Lower lobe of right lung (tissue), 2 donors: ENCODE measurements at regions of chr2 and their contacts with region 1.

Region 1: GRCh38 chr2:112941753-112942658 is 31.0 kb downstream of the IL37 start:
- DNase-seq: peak; percentile 83
- ATAC-seq: peak; percentile 88 to 94
- H3K4me3 ChIP-seq: no peak overlapping the region
- H3K27ac ChIP-seq: no peak overlapping the region
- H3K4me1 ChIP-seq: no peaks in the 10 kb centered on the region
- H3K27me3 ChIP-seq: no peaks in the 10 kb centered on the region
- CTCF ChIP-seq: peak; percentile 86

Region 2: DNA sequence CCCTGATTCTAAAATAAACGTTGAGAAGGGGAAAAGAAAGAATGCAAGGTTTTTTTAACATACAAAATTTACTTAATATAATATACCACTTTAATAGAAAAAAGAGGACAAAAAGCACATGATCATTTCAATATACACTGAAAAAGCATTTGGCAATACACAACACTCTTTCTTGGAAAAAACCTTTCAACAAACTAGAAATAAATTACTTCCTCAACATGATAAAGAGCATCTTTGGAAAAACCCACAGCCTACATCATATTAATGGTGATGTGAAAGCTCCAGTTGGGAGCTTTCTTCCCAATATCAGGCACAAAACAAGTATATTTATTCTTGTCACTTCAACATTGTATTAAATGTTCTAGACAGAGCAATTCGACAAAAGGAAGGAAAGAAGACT is 402.7 kb before region 1 on chr2:
- intact Hi-C with region 1: no loop called
- DNase-seq: no peak
- ATAC-seq: no peak
- H3K4me3 ChIP-seq: no peak overlapping the region
- H3K27ac ChIP-seq: no peak overlapping the region
- H3K4me1 ChIP-seq: peaks cover 21% of the 10 kb centered on the region
- H3K27me3 ChIP-seq: no peaks in the 10 kb centered on the region
- CTCF ChIP-seq: no peak

Region 3: GRCh38 chr2:112749755-112750559 is 192.0 kb before region 1 on chr2:
- intact Hi-C with region 1: loop called (anchors 5 kb)
- DNase-seq: peak; percentile 81
- ATAC-seq: peak; percentile 85 to 93
- H3K4me3 ChIP-seq: no peak overlapping the region
- H3K27ac ChIP-seq: no peak overlapping the region
- H3K4me1 ChIP-seq: no peaks in the 10 kb centered on the region
- H3K27me3 ChIP-seq: no peaks in the 10 kb centered on the region
- CTCF ChIP-seq: peak; percentile 93

Region 4: DNA sequence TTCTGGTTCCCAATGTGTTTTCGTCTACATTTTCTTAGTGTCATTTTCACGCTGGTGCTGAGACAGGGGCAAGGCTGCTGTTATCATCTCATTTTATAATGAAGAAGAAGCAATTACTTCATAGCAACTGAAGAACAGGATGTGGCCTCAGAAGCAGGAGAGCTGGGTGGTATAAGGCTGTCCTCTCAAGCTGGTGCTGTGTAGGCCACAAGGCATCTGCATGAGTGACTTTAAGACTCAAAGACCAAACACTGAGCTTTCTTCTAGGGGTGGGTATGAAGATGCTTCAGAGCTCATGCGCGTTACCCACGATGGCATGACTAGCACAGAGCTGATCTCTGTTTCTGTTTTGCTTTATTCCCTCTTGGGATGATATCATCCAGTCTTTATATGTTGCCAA is 43.1 kb after region 1 on chr2:
- intact Hi-C with region 1: no loop called
- DNase-seq: no peak
- ATAC-seq: no peak
- H3K4me3 ChIP-seq: no peak overlapping the region
- H3K27ac ChIP-seq: no peak overlapping the region
- H3K4me1 ChIP-seq: no peaks in the 10 kb centered on the region
- H3K27me3 ChIP-seq: no peaks in the 10 kb centered on the region
- CTCF ChIP-seq: no peak